Aorta (tissue), 5 donors: ENCODE measurements at regions of chr6 and their contacts with region 1.

Region 1: DNA sequence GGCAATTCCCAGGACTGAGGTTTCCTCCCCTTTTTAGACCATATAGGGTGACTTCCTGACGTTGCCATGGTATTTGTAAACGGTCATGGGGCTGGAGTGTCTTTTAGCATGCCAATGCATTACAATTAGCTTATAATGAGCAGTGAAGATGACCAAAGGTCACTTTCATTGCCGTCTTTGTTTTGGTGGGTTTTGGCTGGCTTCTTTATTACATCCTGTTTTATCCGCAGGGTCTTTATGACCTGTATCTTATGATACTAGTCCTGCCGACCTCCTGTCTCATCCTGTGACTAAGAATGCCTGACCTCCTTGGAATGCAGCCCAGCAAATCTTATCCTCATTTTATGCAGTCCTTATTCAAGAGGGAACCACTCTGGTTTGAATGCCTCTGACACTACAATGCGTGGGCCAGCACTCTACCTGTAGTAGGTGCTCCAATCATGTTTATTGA is 190.1 kb downstream of the KCNQ5 start:
- DNase-seq: no peak
- ATAC-seq: no peak
- H3K4me3 ChIP-seq: no peak overlapping the region
- H3K27ac ChIP-seq: no peak overlapping the region
- H3K4me1 ChIP-seq: no peaks in the 10 kb centered on the region
- H3K27me3 ChIP-seq: no peaks in the 10 kb centered on the region

Region 2: GRCh38 chr6:72787391-72788031 is 24.5 kb before region 1 on chr6:
- intact Hi-C with region 1: no loop called
- DNase-seq: no peak
- ATAC-seq: peak; percentile 40
- H3K4me3 ChIP-seq: no peak overlapping the region
- H3K27ac ChIP-seq: peak overlapping the region in 1 of 2 donors; percentile 63
- H3K4me1 ChIP-seq: peaks cover 11 to 12% of the 10 kb centered on the region in 2 donors
- H3K27me3 ChIP-seq: no peaks in the 10 kb centered on the region

Region 3: GRCh38 chr6:72861935-72862432 is 50.0 kb after region 1 on chr6:
- intact Hi-C with region 1: loop called in 1 of 2 experiments (anchors 5 kb)
- DNase-seq: peak in 1 of 2 donors; percentile 75
- ATAC-seq: peak; percentile 87
- H3K4me3 ChIP-seq: no peak overlapping the region
- H3K27ac ChIP-seq: peak overlapping the region; percentile 23 to 78
- H3K4me1 ChIP-seq: peaks cover 6 to 8% of the 10 kb centered on the region in 2 donors
- H3K27me3 ChIP-seq: no peaks in the 10 kb centered on the region